Aorta (tissue), 5 donors: ENCODE measurements at regions of chr1 and their contacts with region 1.

Region 1: DNA sequence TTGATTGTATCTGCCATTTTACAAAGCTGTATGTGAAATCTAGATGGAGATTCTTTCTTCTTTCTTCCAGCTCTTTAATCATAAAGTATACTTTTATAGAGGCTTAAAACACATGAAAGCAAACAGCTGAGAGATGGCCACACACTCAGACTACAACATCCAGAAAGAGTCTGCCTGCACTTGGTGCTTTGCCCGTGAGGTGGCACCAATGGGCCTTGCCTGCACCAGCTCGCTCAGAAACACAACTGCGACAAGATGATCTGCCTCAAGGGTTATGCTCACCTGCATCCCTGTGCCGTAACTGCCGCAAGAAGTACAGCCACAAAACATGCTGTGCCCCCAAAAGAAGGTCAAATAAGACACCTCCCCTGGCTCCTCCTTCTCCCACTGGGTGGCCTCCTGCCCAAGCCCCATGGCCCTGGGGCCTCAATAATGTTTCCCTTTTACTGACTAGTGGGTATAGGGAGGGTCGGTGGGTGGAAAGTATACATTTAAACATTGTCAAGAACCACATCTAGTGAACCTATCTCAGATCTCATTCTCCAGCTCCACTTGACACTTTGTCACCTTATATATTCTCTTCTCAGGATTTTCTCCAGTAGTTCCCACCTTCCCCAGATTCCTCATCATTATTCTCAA is 66.7 kb upstream of the ANGPTL3 start:
- DNase-seq: peak in 1 of 2 donors; percentile 80
- ATAC-seq: peak; percentile 67
- H3K4me3 ChIP-seq: no peak overlapping the region
- H3K27ac ChIP-seq: no peak overlapping the region
- H3K4me1 ChIP-seq: no peaks in the 10 kb centered on the region
- H3K27me3 ChIP-seq: no peaks in the 10 kb centered on the region

Region 2: DNA sequence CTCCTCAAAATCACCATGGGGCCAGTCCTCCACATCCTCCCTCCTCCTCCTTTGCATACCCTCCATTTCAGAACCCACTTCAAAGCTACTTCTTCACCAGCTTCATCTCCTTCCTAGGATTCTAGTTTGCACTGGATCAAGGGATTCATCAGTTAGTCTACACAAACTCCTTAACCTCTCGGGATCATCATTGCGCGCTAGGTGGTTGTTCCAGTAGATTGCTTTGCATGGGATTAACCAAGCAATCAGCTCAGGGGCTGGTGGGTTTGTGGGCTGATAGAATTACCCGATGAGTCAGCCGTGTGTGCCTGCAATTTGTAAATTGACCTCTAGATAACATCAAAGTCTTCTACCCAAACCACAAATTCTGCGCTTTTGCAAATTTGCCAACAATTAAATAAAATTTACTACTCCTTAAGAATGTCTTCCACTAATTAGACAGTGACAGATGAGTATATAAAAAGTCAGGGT is 219.1 kb before region 1 on chr1:
- intact Hi-C with region 1: no loop called
- DNase-seq: no peak
- ATAC-seq: no peak
- H3K4me3 ChIP-seq: no peak overlapping the region
- H3K27ac ChIP-seq: no peak overlapping the region
- H3K4me1 ChIP-seq: no peaks in the 10 kb centered on the region
- H3K27me3 ChIP-seq: no peaks in the 10 kb centered on the region

Region 3: GRCh38 chr1:62589321-62589720 is 58.7 kb after region 1 on chr1:
- intact Hi-C with region 1: no loop called
- DNase-seq: no peak
- ATAC-seq: no peak
- H3K4me3 ChIP-seq: no peak overlapping the region
- H3K27ac ChIP-seq: no peak overlapping the region
- H3K4me1 ChIP-seq: no peaks in the 10 kb centered on the region
- H3K27me3 ChIP-seq: no peaks in the 10 kb centered on the region

Region 4: DNA sequence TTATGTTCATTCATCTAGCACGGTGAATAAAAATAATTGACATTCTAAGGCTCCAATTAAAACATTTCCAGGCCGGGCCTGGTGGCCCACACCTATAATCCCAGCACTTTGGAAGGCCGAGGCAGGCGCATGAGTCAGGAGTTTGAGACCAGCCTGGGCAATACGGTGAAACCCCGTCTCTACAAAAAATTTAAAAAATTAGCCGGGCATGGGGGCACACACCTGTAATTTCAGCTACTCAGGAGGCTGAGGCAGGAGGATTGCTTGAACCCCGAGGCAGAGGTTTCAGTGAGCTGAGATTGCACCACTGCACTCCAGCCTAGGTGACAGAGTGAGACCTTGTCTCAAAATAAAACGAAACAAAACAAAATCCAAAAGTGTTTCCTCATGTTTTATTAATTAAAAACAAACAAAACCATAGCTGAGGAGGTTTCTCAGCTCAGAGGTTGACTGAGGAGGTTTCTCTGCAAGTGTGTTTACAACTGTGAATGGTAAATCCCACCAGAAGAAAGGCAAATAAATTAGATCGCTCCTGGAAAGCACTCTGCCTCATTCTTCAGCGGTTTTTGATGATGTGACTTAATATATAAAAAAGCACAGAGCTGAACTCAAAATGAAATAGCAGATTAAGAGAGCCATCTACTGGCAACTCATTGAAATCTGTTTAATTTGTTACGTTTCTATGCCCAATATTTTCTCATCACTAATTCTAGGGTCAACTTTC is 215.6 kb after region 1 on chr1:
- intact Hi-C with region 1: loop called (anchors 2 kb)
- DNase-seq: no peak
- ATAC-seq: peak; percentile 67
- H3K4me3 ChIP-seq: no peak overlapping the region
- H3K27ac ChIP-seq: no peak overlapping the region
- H3K4me1 ChIP-seq: peaks cover 4 to 5% of the 10 kb centered on the region in 2 donors
- H3K27me3 ChIP-seq: no peaks in the 10 kb centered on the region